Naive thymus-derived CD8-positive, alpha-beta T cell (primary cell): ENCODE measurements at regions of chr19 and their contacts with region 1.

Region 1: DNA sequence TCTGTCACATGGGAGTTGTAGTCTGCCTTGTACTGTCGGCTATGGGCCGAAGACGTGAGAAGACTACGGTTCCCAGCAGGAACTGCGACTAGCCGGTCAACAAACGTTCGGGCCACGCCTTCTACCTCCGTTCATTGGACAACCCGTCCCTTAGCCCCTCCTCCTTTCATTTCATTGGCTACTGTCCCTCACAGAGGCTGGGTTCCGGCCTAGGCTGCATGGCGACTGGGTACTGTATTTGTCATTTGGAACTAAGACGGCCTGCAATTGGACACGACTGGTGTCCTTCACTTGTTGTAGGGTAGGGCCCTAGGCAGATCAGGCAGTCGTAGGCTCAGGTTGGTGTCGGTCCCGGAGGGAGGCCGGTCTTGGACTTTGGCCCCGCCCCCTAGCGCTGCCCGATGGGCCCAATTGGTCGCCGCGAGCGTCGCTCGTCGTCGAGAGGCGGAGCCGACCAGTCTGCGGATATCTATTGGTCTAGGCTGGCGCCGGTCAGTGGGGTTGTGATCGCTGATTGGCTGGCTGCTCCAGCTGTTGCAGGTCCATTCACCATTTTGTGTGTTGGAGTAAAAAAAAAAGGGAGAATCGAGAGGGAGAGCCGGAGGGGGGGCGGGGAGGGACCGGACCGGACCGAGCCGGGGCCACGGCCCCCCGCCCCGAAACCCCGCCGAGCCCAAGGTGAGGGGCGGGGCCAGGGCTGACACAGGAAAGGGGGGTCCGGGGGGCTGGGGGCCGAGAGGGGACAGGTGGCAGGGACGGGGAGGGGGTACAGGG is at the start of gene CIC:
- DNase-seq: peak; percentile 97 to 100 (median 100)
- ATAC-seq: peak; percentile 81 to 82
- H3K4me3 Mint-ChIP-seq: peak within 1 kb of the TSS in 6 of 10 donors; percentile 90 to 98 (median 94)
- H3K27ac Mint-ChIP-seq: peak within 1 kb of the TSS in 5 of 10 donors; percentile 97 to 99 (median 99)
- H3K4me1 Mint-ChIP-seq: peaks cover 0 to 37% (median 25%) of the 10 kb centered on the region in 4 donors
- H3K27me3 Mint-ChIP-seq: no peaks in the 10 kb centered on the region
- polyA plus RNA-seq, gene CIC: 0.43 to 1.8 (median 1.3) TPM

Region 2: GRCh38 chr19:42176990-42177685 is 91.8 kb before region 1 on chr19:
- POLR2A ChIA-PET with region 1: no interaction called
- DNase-seq: peak; percentile 60 to 84 (median 69)
- ATAC-seq: peak; percentile 95 to 96
- H3K4me3 Mint-ChIP-seq: peak overlapping the region in 1 of 10 donors; percentile 11
- H3K27ac Mint-ChIP-seq: no peak overlapping the region
- H3K4me1 Mint-ChIP-seq: peaks cover 13 to 21% (median 16%) of the 10 kb centered on the region in 4 donors
- H3K27me3 Mint-ChIP-seq: peaks cover 14 to 28% (median 22%) of the 10 kb centered on the region in 5 donors

Region 3: DNA sequence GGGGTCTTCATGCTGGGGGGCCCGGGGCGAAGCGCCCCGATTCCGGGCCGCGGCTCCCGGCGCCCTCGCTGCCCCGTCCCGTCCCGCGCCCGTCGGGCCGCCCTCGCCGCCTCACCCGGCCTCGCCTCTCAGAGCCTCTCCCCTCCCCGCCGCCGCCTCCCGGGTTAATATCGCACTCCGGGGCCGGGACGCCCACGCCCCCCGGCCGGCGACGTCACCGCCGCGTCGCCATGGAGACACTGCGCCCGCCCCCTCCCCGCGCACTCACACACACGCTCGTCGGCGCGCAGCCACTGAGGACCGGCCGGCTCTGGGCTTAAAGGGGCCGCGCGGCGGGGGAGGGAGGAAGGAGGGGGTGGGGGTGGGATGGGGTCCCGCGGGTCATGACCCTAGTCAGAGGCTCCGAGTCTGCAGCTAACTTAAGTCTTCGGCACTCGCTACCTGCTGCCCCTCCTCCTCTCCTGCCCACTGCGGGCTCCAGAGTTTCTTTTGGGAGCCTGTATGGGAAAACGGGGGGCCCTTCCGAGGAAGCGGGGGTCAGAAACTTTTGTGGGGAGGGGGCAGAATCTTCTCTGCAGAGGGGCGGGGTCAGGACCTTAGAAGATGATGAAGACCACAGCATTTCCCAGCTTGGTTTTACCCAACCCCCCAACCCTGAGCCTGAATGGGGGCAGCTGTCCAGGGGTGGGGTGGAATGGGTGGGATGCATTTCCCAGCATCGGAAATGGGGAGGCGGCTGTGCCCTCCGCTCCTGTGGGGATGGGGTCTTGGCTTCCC is 13.7 kb before region 1 on chr19 and contains the start of gene ERF:
- POLR2A ChIA-PET with region 1: interaction called, 12 read pairs
- DNase-seq: peak; percentile 89 to 97 (median 94)
- ATAC-seq: peak; percentile 64 to 78
- H3K4me3 Mint-ChIP-seq: peak within 1 kb of the TSS; percentile 77 to 92 (median 82)
- H3K27ac Mint-ChIP-seq: peak within 1 kb of the TSS in 9 of 10 donors; percentile 67 to 96 (median 92)
- H3K4me1 Mint-ChIP-seq: peaks cover 16 to 44% (median 35%) of the 10 kb centered on the region in 4 donors
- H3K27me3 Mint-ChIP-seq: no peaks in the 10 kb centered on the region
- polyA plus RNA-seq, gene ERF: 2.8 to 6.2 (median 4.6) TPM

Region 4: GRCh38 chr19:42283143-42284065 is 14.5 kb after region 1 on chr19:
- POLR2A ChIA-PET with region 1: interaction called, 59 read pairs
- DNase-seq: peak; percentile 91 to 99 (median 96)
- ATAC-seq: peak; percentile 61 to 71
- H3K4me3 Mint-ChIP-seq: no peak overlapping the region
- H3K27ac Mint-ChIP-seq: no peak overlapping the region
- H3K4me1 Mint-ChIP-seq: peaks cover 33 to 46% (median 35%) of the 10 kb centered on the region in 4 donors
- H3K27me3 Mint-ChIP-seq: no peaks in the 10 kb centered on the region

Region 5: DNA sequence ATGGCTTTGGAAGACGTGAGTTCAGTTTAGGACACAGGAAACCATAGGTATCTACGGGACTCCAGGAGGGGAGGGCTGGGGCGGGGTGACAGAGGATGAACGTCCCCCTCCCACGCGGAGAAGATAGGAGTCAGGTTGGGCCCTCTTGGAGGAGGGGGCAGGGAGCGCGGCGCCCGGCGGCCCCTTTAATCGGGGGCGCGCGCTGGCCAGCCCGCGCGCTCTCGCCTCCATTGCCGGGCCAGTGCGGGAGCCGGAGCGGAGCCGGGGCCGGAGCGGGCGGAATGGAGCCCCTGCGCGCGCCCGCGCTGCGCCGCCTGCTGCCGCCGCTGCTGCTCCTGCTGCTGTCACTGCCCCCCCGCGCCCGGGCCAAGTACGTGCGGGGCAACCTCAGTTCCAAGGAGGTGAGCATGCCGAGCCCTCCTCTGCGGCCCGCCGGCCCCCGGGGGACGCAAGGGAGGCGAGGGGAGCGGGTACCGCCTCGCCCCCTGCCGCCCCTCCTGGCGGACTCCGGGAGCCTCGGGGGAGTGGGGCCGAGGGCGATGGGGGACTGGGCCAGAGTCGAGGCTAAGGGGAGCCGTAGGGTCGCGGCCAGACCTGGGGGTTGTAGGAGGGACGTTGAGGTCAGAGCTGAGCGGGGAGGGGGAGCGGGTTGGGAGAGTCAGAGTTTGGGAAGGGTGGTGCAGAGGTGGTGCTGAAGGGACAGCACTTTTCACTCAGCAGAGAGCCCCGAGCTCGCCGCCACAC is 44.4 kb after region 1 on chr19 and contains the start of gene TMEM145:
- POLR2A ChIA-PET with region 1: no interaction called
- DNase-seq: peak in 4 of 10 donors; percentile 22 to 65 (median 38)
- ATAC-seq: peak; percentile 83 to 87
- H3K4me3 Mint-ChIP-seq: peak within 1 kb of the TSS; percentile 60 to 87 (median 70)
- H3K27ac Mint-ChIP-seq: peak within 1 kb of the TSS in 2 of 10 donors; percentile 73 to 87
- H3K4me1 Mint-ChIP-seq: peaks cover 14 to 27% (median 19%) of the 10 kb centered on the region in 4 donors
- H3K27me3 Mint-ChIP-seq: peaks cover 16 to 60% (median 28%) of the 10 kb centered on the region in 5 donors
- polyA plus RNA-seq, gene TMEM145: not detected

Region 6: DNA sequence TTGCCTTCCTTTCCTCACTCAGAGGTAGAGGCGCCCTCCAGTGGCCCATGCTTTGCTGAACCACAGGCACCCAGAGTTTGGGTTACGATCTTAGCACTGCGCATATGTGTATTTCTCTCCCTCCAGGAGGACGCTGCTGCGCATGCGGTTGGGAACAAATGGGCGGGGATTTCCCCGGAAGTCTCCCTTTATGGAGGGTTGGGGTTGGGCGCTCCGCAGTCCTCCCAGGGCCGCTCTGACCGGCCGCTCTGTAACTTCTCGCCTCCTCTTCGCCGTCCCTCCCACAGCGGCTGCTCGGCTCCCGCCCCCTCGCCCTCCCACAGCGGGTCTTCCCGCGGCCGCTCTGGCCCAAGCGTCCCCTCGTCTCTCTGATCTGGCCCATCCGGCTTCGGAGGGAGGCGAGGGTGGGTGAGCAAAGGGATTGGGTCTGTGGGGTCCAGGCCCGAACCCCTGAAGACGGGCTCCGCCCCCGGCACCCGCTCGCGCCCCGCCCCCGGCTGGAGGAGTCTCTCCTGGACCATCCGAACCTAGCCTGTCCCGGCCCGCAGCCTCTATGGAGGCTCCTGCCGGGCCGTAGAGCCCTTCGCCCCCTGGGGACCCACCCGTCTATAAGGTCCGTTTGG is 56.5 kb after region 1 on chr19 and contains the start of gene MEGF8:
- POLR2A ChIA-PET with region 1: no interaction called
- DNase-seq: peak; percentile 88 to 99 (median 98)
- ATAC-seq: peak; percentile 87 to 93
- H3K4me3 Mint-ChIP-seq: peak within 1 kb of the TSS; percentile 92 to 97 (median 94)
- H3K27ac Mint-ChIP-seq: peak within 1 kb of the TSS; percentile 78 to 95 (median 89)
- H3K4me1 Mint-ChIP-seq: peaks cover 20 to 37% (median 30%) of the 10 kb centered on the region in 4 donors
- H3K27me3 Mint-ChIP-seq: peaks cover 6 to 20% (median 12%) of the 10 kb centered on the region in 5 donors
- polyA plus RNA-seq, gene MEGF8: 0.23 to 0.57 (median 0.34) TPM

Region 7: GRCh38 chr19:42352301-42353259 is 83.7 kb after region 1 on chr19:
- POLR2A ChIA-PET with region 1: no interaction called
- DNase-seq: no peak
- ATAC-seq: peak in 1 of 2 donors; percentile 23
- H3K4me3 Mint-ChIP-seq: no peak overlapping the region
- H3K27ac Mint-ChIP-seq: no peak overlapping the region
- H3K4me1 Mint-ChIP-seq: peaks cover 0 to 4% (median 1%) of the 10 kb centered on the region in 4 donors
- H3K27me3 Mint-ChIP-seq: no peaks in the 10 kb centered on the region